Adrenal gland (tissue), 19 donors: ENCODE measurements at regions of chr5 and their contacts with region 1.

Region 1: DNA sequence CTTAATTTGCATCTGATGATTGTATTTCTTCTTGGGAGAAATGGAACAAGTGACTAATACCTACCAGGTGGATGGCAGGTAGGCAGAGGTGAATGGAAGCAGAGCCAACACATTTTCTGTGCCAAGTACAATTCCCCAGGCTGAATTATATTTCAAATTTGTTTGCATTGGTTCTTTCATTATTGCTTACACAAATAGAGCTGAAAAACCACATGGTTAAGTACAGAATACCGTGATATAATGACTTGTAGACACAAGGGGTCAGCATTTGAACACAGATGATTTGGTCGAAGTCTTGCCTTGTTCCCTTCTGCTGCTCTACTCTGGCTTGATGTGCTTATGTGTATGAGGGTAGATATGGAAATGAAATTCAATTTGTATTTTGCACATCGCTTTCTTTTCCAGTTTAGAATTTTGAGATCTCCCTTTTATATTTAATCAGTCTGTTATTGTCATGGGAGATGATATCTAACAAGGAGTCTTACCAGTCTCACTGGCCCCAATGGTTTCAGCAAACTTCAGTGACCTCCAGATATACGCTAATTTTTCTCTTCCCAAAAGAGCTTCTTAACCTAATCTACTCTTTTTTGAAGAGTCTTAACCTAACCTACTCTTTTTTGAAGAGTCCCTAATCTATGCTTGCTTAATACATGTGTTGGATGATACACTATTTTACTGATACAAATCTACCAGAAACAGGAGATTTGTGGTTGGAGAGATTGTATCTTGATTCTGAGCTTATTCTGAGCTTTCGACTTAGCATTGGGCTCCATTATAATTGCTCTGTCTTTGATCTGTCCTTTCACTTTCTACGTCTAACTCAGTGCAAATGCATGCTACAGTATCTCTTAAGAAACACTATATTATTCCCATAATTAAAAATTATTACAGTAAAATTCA is 88.1 kb downstream of the PCSK1 start:
- DNase-seq: peak in 5 of 7 donors; percentile 25 to 56 (median 30)
- H3K4me3 ChIP-seq: no peak overlapping the region
- H3K27ac ChIP-seq: no peak overlapping the region
- H3K4me1 ChIP-seq: peaks cover 0 to 1% of the 10 kb centered on the region in 2 donors
- H3K27me3 ChIP-seq: no peaks in the 10 kb centered on the region
- CTCF ChIP-seq: peak; percentile 27 to 79 (median 73)
- POLR2A ChIP-seq: no peak

Region 2: GRCh38 chr5:95822542-95823181 is 522.3 kb before region 1 on chr5 and contains the start of gene GLRX:
- intact Hi-C with region 1: no loop called
- DNase-seq: peak; percentile 73 to 88 (median 84)
- H3K4me3 ChIP-seq: peak within 1 kb of the TSS; percentile 66 to 90 (median 72)
- H3K27ac ChIP-seq: peak within 1 kb of the TSS; percentile 70 to 97 (median 95)
- H3K4me1 ChIP-seq: peaks cover 50 to 61% of the 10 kb centered on the region in 2 donors
- H3K27me3 ChIP-seq: no peaks in the 10 kb centered on the region
- CTCF ChIP-seq: no peak
- POLR2A ChIP-seq: peak; percentile 79 to 81
- total RNA-seq, gene GLRX: 55.7 to 236 (median 131) TPM

Region 3: GRCh38 chr5:96315431-96315830 is 29.5 kb before region 1 on chr5:
- intact Hi-C with region 1: no loop called
- DNase-seq: no peak
- H3K4me3 ChIP-seq: no peak overlapping the region
- H3K27ac ChIP-seq: no peak overlapping the region
- H3K4me1 ChIP-seq: no peaks in the 10 kb centered on the region
- H3K27me3 ChIP-seq: no peaks in the 10 kb centered on the region
- CTCF ChIP-seq: no peak
- POLR2A ChIP-seq: no peak

Region 4: GRCh38 chr5:96595300-96596090 is 250.6 kb after region 1 on chr5:
- intact Hi-C with region 1: loop called (anchors 5 kb)
- DNase-seq: no peak
- H3K4me3 ChIP-seq: no peak overlapping the region
- H3K27ac ChIP-seq: no peak overlapping the region
- H3K4me1 ChIP-seq: peaks cover 0 to 3% of the 10 kb centered on the region in 2 donors
- H3K27me3 ChIP-seq: no peaks in the 10 kb centered on the region
- CTCF ChIP-seq: peak in 5 of 6 experiments; percentile 22 to 45 (median 35)
- POLR2A ChIP-seq: no peak